Activated CD4-positive, alpha-beta memory T cell treated with anti-CD3 and anti-CD28 coated beads, Interleukin-2, amount 10 ng/mL, durations not matched to agents 7 days and 5 days (primary cell): ENCODE measurements at regions of chr11 and their contacts with region 1.

Region 1: DNA sequence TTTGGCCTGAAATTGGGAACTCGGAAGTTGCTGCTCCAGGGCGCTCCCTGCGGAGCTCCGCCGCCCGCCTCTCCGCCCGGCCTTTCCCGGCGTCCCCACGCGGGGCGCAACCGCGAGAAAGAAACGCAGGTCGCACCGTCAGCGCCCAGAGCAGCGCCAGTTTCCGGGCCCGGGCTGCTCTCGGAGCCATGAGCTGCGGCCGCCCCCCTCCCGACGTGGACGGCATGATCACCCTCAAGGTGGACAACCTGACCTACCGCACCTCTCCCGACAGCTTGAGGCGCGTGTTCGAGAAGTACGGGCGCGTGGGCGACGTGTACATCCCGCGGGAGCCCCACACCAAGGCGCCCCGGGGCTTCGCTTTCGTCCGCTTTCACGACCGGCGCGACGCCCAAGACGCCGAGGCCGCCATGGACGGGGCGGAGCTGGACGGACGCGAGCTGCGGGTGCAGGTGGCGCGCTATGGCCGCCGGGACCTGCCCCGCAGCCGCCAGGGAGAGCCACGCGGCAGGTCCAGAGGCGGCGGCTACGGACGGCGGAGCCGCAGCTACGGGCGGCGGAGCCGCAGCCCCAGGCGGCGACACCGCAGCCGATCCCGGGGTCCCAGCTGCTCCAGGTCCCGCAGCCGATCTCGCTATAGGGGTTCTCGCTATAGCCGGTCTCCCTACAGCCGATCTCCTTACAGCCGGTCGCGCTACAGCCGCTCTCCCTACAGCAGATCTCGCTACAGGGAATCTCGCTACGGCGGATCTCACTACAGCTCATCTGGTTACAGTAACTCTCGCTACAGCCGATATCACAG is 521 bp downstream of the SRSF8 start:
- DNase-seq: peak; percentile 76
- H3K4me3 Mint-ChIP-seq: peak overlapping the region; percentile 92
- H3K27ac Mint-ChIP-seq: peak overlapping the region; percentile 94
- H3K4me1 Mint-ChIP-seq: peaks cover 25% of the 10 kb centered on the region
- H3K27me3 Mint-ChIP-seq: peaks cover under 1% of the 10 kb centered on the region

Region 2: GRCh38 chr11:94873916-94874540 is 193.2 kb before region 1 on chr11:
- CTCF ChIA-PET with region 1: no interaction called
- POLR2A ChIA-PET with region 1: no interaction called
- DNase-seq: no peak
- H3K4me3 Mint-ChIP-seq: no peak overlapping the region
- H3K27ac Mint-ChIP-seq: no peak overlapping the region
- H3K4me1 Mint-ChIP-seq: peaks cover 17% of the 10 kb centered on the region
- H3K27me3 Mint-ChIP-seq: peaks cover 6% of the 10 kb centered on the region

Region 3: GRCh38 chr11:94973099-94973968 is 93.9 kb before region 1 on chr11 and contains the starts of genes CWC15 and KDM4D:
- CTCF ChIA-PET with region 1: interaction called, 21 read pairs
- POLR2A ChIA-PET with region 1: interaction called, 51 read pairs
- DNase-seq: peak; percentile 95
- H3K4me3 Mint-ChIP-seq: peak within 1 kb of the TSS; percentile 99
- H3K27ac Mint-ChIP-seq: peak within 1 kb of the TSS; percentile 88
- H3K4me1 Mint-ChIP-seq: peaks cover 53% of the 10 kb centered on the region
- H3K27me3 Mint-ChIP-seq: no peaks in the 10 kb centered on the region
- total RNA-seq, gene CWC15: 56.5 to 59.1 TPM
- total RNA-seq, gene KDM4D: 0.83 to 1.1 TPM

Region 4: DNA sequence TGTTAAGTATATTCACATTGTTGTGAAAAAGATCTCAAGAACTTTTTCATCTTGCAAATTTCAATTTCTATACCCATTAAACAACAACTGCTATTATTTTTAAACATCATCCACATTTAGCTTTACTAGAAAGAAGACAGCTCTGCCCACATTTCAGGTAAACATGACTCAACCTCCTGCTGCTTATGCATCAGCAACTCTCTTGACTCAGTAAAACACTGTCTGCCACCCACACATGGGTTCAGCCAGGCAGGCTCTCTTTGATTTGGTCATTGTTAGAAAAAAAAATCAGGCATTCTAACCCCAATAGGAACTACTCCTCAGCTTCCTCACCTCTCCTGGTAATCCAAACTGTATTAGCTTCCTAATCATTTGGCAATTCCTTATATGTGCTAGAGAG is 17.3 kb after region 1 on chr11:
- CTCF ChIA-PET with region 1: interaction called, 167 read pairs
- POLR2A ChIA-PET with region 1: interaction called, 253 read pairs
- DNase-seq: peak; percentile 40
- H3K4me3 Mint-ChIP-seq: no peak overlapping the region
- H3K27ac Mint-ChIP-seq: no peak overlapping the region
- H3K4me1 Mint-ChIP-seq: peaks cover 32% of the 10 kb centered on the region
- H3K27me3 Mint-ChIP-seq: no peaks in the 10 kb centered on the region

Region 5: GRCh38 chr11:95138448-95138847 is 71.2 kb after region 1 on chr11:
- CTCF ChIA-PET with region 1: interaction called, 10 read pairs
- POLR2A ChIA-PET with region 1: interaction called, 4 read pairs
- DNase-seq: no peak
- H3K4me3 Mint-ChIP-seq: no peak overlapping the region
- H3K27ac Mint-ChIP-seq: no peak overlapping the region
- H3K4me1 Mint-ChIP-seq: peaks cover 9% of the 10 kb centered on the region
- H3K27me3 Mint-ChIP-seq: peaks cover 11% of the 10 kb centered on the region